ENCODE measurements at regions of chr12 and their contacts with region 1.

Region 1: GRCh38 chr12:115916910-115917668 is 360.4 kb downstream of the MED13L start:
- DNase-seq: peak; percentile 36 to 94 (median 58)
- ATAC-seq: peak; percentile 100
- H3K4me3 ChIP-seq: peak overlapping the region in 1 of 2 donors; percentile 6
- H3K27ac ChIP-seq: no peak overlapping the region
- H3K4me1 ChIP-seq: peaks cover 4 to 6% of the 10 kb centered on the region in 2 donors
- H3K27me3 ChIP-seq: peaks cover 4 to 59% of the 10 kb centered on the region in 2 donors
- CTCF ChIP-seq: peak; percentile 91 to 96

Region 2: DNA sequence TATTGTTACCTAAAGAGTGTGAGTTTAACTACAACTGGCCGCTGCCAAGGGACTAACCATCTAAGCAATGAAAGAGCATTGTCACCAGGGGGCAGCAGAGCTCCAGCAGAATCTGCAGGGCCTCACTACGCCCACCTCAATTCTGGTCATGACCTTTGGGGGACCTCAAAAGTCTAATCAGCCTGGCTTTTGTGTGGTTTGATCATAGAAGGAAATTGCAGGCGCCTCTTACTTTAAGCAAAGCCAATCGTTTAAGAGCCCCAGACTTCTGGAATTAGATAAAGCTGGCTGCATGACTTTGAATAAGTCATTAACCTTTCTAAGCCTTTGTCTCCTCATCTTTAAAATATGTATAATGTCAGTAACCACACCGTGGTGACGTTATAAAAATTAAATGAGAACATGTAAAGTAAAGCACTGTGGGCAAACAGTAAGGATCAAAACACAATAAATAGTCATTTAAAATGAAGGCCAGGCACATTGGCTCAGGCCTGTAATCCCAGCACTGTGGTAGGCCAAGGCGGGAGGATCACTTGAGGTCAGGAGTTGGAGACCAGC is 1291.7 kb before region 1 on chr12:
- intact Hi-C with region 1: loop called in 1 of 2 experiments (anchors 10 kb)
- DNase-seq: peak in 1 of 4 donors; percentile 41
- ATAC-seq: peak; percentile 73
- H3K4me3 ChIP-seq: no peak overlapping the region
- H3K27ac ChIP-seq: no peak overlapping the region
- H3K4me1 ChIP-seq: no peaks in the 10 kb centered on the region
- H3K27me3 ChIP-seq: no peaks in the 10 kb centered on the region
- CTCF ChIP-seq: peak; percentile 60 to 64

Region 3: DNA sequence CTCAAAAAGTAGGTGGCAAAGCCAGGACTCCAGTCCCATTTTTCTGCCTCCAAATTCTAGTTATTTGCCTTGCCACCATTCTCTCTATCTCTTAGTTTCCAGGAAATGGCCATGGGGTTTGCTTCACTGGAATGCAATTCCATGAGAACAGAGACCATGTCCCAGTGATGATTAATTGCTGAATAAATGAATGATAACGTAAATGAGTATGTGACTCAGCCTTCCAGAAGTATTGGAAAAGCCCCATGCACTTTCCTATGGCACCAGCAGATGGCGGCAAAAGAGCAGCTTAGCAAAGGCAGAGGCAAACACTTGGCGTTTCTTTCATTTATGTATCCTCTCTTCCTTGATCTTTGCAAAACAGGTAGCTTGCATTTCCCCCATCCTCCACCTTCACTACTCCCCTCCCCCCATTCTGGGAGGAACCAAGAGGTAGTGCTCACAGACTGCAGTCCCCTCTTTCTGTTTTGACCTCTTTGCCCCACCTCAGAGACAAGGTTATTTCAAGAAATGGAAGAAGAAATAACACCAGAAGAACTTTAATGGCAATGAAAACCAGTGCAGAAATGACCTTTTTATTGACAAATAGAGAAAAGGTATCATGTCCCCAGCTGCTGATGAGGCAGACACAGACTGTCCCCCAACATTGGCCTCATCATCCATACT is 1254.4 kb before region 1 on chr12:
- intact Hi-C with region 1: loop called in 1 of 2 experiments (anchors 5 kb)
- DNase-seq: peak in 3 of 4 donors; percentile 52 to 75 (median 69)
- ATAC-seq: peak; percentile 91
- H3K4me3 ChIP-seq: no peak overlapping the region
- H3K27ac ChIP-seq: no peak overlapping the region
- H3K4me1 ChIP-seq: peaks cover 0 to 4% of the 10 kb centered on the region in 2 donors
- H3K27me3 ChIP-seq: peaks cover 22 to 53% of the 10 kb centered on the region in 2 donors
- CTCF ChIP-seq: peak; percentile 85 to 91